Activated naive CD4-positive, alpha-beta T cell treated with anti-CD3 and anti-CD28 coated beads for 36 hours (primary cell): ENCODE measurements at regions of chr5 and their contacts with region 1.

Region 1: DNA sequence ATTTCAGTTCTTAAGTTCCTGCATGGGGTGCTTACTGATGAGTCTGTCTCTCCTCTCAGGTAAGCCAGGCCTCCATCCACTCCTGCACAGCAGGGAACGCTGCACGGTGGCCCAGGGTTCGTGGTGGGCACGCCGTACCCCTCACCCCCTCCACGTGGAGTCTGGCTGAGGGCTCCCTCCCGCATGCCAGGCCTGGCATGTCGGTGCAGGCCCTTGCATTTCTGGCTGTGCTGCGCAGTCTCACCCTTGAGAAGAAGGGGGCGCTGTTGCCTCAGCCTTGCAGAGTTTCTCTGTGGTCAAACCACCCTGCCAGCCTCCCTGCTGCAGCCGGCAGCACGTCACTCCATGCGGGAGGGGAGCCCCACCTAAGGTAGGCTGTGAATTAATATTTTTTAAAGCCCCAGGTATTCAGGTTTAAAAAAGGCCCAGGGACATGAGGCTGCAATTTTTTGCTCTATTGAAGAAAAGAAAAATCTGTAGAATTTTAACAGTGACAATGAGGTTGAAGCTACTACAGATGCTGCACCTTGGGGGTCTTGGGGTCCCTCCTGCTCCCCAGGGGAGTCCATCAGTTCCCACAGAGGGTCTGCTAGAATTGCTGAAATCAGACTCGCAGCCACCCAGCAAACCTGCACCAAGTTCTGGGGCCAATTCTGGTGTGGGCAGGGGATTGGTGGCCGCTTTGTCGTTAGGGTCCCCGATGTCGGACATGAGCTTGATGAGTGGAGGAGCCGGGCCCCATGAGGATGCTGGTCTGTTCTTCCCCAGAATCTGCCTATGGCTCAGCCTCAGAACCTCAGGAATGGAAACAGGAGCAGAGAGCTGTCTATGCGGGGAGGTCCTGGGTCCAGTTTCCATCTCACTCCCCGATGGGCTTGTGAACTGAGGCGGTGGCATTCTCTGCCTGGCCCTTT is 52.6 kb downstream of the TENT4A start:
- DNase-seq: peak; percentile 87
- H3K4me3 Mint-ChIP-seq: no peak overlapping the region
- H3K27ac Mint-ChIP-seq: no peak overlapping the region
- H3K4me1 Mint-ChIP-seq: peaks cover 10% of the 10 kb centered on the region
- H3K27me3 Mint-ChIP-seq: no peaks in the 10 kb centered on the region

Region 2: DNA sequence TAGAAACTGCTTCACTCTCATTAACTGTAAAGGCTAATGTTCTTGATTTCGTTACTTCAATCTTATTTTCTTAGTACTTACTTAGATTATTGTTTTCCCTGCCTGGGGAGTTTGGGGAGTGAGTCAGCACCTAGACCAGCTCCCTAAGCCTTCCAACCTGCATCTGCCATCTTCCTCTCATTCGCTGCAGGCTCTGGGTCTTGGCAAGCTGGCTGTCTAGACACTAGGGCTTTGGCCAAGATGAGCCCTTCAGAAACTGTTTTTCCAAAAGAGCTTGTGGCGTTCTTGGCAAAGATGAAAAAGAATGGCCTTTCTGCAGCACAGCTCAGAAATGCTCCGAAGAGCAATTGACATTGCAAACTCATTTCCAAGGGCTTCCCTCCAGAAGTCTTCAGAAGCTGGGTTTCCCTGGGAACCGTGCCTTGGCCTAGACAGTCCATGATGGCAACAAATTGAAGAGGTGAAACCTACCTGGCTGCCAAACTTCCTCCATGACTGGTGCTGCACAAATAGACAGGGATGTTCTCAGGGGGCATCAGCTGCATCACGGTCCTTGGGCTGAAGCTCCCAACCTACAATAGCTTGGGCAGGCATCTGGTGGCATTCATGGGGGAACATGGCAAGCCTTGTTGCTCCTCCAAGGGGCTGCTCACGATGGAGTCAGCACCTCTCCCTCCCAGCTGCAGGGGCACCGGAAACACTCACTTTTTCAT is 209.6 kb before region 1 on chr5:
- CTCF ChIA-PET with region 1: no interaction called
- intact Hi-C with region 1: no loop called
- DNase-seq: no peak
- H3K4me3 Mint-ChIP-seq: no peak overlapping the region
- H3K27ac Mint-ChIP-seq: no peak overlapping the region
- H3K4me1 Mint-ChIP-seq: no peaks in the 10 kb centered on the region
- H3K27me3 Mint-ChIP-seq: peaks cover 11% of the 10 kb centered on the region

Region 3: GRCh38 chr5:6576861-6577501 is 188.9 kb before region 1 on chr5:
- CTCF ChIA-PET with region 1: no interaction called
- intact Hi-C with region 1: no loop called
- DNase-seq: peak; percentile 44
- H3K4me3 Mint-ChIP-seq: no peak overlapping the region
- H3K27ac Mint-ChIP-seq: no peak overlapping the region
- H3K4me1 Mint-ChIP-seq: no peaks in the 10 kb centered on the region
- H3K27me3 Mint-ChIP-seq: peaks cover 20% of the 10 kb centered on the region

Region 4: GRCh38 chr5:6722015-6722414 is 43.9 kb before region 1 on chr5:
- CTCF ChIA-PET with region 1: no interaction called
- intact Hi-C with region 1: no loop called
- DNase-seq: no peak
- H3K4me3 Mint-ChIP-seq: no peak overlapping the region
- H3K27ac Mint-ChIP-seq: no peak overlapping the region
- H3K4me1 Mint-ChIP-seq: peaks cover 87% of the 10 kb centered on the region
- H3K27me3 Mint-ChIP-seq: no peaks in the 10 kb centered on the region

Region 5: DNA sequence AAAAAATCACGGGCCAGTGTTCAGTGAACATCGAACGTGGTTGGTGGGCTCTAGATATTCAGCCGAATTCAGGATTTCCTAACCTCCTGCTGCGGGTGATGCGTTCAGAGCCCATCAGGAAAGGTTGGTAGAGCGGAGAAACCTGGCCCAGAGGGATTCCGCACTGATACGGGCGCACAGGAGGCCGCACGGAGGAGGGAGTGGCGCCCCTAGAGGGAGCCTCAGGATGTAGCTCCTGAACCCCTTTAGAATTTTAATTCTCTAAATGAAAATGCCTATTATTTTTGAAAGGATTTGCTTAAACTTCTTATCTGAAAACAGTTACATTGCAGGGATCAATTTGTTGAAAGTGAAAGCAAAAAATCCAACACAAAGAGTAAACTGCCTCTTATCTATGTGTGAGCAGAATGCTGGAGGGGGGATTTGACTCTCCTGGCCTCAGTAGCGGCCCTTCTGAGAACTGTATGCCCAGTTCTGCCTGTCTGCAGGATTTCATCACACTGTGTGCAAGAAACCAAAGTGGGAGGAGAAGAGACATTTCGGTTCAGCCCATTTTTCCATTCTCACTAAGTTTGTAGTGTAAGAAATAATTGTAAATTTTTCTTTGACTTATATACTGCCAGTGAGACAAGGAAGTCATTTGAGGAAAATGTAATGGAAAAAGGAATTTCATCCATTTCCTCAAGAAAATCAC is 23.2 kb after region 1 on chr5:
- CTCF ChIA-PET with region 1: no interaction called
- intact Hi-C with region 1: no loop called
- DNase-seq: no peak
- H3K4me3 Mint-ChIP-seq: no peak overlapping the region
- H3K27ac Mint-ChIP-seq: no peak overlapping the region
- H3K4me1 Mint-ChIP-seq: peaks cover 8% of the 10 kb centered on the region
- H3K27me3 Mint-ChIP-seq: peaks cover 8% of the 10 kb centered on the region

Region 6: DNA sequence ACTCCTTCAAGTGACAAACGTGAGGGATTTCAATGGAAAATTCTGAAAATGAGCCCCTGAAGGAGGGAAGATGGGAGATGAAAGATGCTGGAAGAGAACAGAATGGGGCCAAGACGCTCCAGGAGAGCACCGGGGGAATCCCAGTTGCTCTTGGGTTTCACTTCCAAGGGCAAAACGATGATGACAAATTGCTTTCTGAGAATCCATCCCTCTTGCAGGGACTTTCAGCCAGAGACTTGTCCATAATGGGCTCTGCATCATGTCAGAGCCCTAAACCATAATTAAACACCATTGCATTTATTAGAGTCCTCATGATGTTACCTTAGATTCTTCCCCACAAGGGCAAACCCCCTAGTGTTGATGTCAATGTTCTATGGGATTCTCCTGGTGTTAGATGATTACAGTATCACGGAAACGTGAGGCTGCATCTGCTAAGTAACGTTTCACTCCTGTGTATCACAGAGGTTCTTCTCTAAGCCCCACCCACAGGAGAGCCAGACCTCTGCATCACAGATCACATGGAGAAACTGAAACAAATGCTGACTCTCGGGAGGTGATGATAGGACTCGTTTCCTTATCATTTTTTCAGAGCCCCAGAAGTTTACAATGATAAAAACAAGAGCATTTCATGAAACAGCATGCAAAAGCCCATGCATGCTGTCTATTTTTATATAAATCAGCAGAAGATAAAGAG is 61.8 kb after region 1 on chr5:
- CTCF ChIA-PET with region 1: no interaction called
- intact Hi-C with region 1: loop called (anchors 5 kb)
- DNase-seq: peak; percentile 59
- H3K4me3 Mint-ChIP-seq: peak overlapping the region; percentile 11
- H3K27ac Mint-ChIP-seq: no peak overlapping the region
- H3K4me1 Mint-ChIP-seq: peaks cover 31% of the 10 kb centered on the region
- H3K27me3 Mint-ChIP-seq: peaks cover 22% of the 10 kb centered on the region

Region 7: DNA sequence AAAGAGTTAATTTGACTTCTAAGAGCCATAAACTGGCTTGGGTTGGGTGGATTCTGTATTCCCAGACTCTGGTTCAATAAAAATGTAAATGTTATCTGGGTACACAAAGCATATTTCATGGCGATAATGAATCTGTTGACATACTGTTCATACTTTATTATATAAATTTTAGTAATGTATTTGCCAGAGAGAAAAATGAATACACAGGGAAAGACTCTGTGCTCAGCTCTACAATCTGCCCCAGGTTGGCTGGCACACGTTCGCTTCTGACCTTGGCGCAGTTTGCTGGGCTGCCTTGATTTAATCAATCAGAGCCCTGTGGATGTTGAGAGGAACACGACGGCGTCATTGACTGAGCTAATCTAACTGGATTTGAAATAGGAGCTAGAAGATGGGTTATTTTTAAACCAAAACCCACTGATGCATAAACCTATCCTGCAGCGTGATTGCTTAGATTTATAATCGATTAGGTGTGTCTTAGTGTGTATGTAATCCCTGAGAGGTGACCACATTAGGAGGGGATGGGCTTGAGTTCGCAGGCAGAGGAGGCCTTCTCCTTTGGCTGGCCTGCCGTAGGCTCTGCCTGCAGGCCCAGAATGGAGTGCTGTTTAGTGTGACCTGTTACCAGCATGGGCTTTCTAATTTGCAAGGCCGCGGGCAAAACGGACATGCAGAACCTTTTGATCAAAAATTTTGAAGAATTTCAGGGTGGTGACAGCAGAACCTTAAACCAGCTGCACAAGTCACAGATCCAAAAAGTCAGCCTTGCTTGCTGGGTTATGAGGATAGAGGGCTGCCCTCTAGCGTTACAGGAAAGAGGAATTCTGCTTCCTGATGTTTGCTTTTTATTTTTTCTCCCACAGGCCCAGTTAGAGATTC is 626.2 kb after region 1 on chr5:
- CTCF ChIA-PET with region 1: no interaction called
- intact Hi-C with region 1: loop called (anchors 5 kb)
- DNase-seq: no peak
- H3K4me3 Mint-ChIP-seq: no peak overlapping the region
- H3K27ac Mint-ChIP-seq: no peak overlapping the region
- H3K4me1 Mint-ChIP-seq: peaks cover 5% of the 10 kb centered on the region
- H3K27me3 Mint-ChIP-seq: peaks cover 23% of the 10 kb centered on the region

Region 8: DNA sequence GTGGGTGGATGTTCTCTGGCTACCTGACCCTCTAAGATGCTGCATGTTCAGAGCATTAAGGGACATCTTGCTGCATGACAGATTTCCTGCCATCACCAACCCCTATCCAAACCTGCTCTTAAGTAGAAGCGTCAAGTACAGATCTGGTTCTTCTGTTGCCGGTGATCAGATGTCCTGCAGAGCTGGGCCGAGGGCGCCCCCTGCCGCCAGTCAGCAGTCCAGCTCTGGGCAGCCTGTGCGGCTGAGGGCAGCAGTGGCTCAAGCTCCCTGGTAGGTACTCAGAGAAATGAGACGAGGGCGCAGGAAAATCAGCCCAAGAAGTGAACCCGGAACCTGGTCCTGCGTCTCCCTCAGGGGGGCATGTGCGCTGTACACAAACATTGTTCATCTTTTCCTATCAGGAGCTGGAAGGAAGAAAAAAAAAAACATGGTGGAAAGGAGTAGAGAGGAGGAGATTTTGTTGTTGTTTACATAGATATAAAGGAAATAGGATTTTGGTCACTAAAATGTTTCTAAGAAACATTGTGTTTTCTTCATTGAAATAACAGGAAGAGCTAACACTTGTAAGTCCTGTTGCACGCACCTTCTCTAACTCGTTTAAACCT is 989.2 kb after region 1 on chr5:
- CTCF ChIA-PET with region 1: no interaction called
- intact Hi-C with region 1: loop called (anchors 2 kb)
- DNase-seq: peak; percentile 60
- H3K4me3 Mint-ChIP-seq: no peak overlapping the region
- H3K27ac Mint-ChIP-seq: no peak overlapping the region
- H3K4me1 Mint-ChIP-seq: no peaks in the 10 kb centered on the region
- H3K27me3 Mint-ChIP-seq: peaks cover 44% of the 10 kb centered on the region

Region 9: GRCh38 chr5:7856855-7857254 is 1091.0 kb after region 1 on chr5:
- CTCF ChIA-PET with region 1: no interaction called
- intact Hi-C with region 1: loop called (anchors 5 kb)
- DNase-seq: peak; percentile 55
- H3K4me3 Mint-ChIP-seq: no peak overlapping the region
- H3K27ac Mint-ChIP-seq: no peak overlapping the region
- H3K4me1 Mint-ChIP-seq: peaks cover 23% of the 10 kb centered on the region
- H3K27me3 Mint-ChIP-seq: no peaks in the 10 kb centered on the region